SK-N-SH (cell line): ENCODE measurements at regions of chr1 and their contacts with region 1.

Region 1: GRCh38 chr1:47785561-47786271 is 211.5 kb downstream of the TRABD2B start:
- DNase-seq: peak; percentile 61
- H3K4me3 ChIP-seq: no peak overlapping the region
- H3K27ac ChIP-seq: no peak overlapping the region
- H3K4me1 ChIP-seq: no peaks in the 10 kb centered on the region
- H3K27me3 ChIP-seq: no peaks in the 10 kb centered on the region
- CTCF ChIP-seq: peak; percentile 24; the same call in 1 of the 2 replicates
- EP300 ChIP-seq: no peak
- RAD21 ChIP-seq: peak; percentile 71

Region 2: GRCh38 chr1:47805921-47806361 is 20.2 kb after region 1 on chr1:
- CTCF ChIA-PET with region 1: interaction called, 10 read pairs
- POLR2A ChIA-PET with region 1: no interaction called
- DNase-seq: peak; percentile 77
- H3K4me3 ChIP-seq: no peak overlapping the region
- H3K27ac ChIP-seq: peak overlapping the region in 1 of 2 experiments; percentile 67; a peak in 2 of 4 replicates
- H3K4me1 ChIP-seq: peaks cover 0 to 26% of the 10 kb centered on the region in 2 experiments; a peak in 2 of 4 replicates
- H3K27me3 ChIP-seq: no peaks in the 10 kb centered on the region
- CTCF ChIP-seq: no peak
- EP300 ChIP-seq: peak in 1 of 2 experiments; percentile 74; a peak in 2 of 4 replicates
- RAD21 ChIP-seq: peak; percentile 29